HEK293 (cell line): ENCODE measurements at regions of chr3 and their contacts with region 1.

Region 1: GRCh38 chr3:15756505-15756904 is 41.3 kb downstream of the ANKRD28 start:
- H3K4me3 ChIP-seq: no peak overlapping the region
- H3K27ac ChIP-seq: no peak overlapping the region
- H3K4me1 ChIP-seq: 0 out of 2 replicates have a peak, but pooled peaks cover 4% of the 10 kb centered on the region
- CTCF ChIP-seq: no peak

Region 2: DNA sequence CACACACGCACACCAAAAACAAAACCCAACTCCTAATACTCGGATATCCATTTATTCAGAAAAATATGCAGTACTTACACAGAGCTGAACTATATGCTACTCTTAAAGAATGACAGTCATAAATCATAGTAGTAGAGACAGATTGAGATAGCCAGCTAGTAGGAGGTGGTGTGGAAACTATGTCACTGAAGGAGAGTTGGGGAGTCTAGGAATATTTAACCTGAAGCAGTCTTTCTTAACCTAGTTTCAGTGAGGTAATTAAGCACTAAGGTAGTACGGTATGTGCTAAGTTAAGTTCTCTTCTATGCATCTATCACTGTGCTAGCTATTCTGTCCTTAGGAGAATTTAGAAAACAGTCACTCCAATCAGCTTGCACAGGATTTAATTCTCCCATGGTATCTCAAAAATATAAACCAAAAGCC is 12.9 kb before region 1 on chr3:
- CTCF ChIA-PET with region 1: no interaction called
- POLR2A ChIA-PET with region 1: no interaction called
- H3K4me3 ChIP-seq: no peak overlapping the region
- H3K27ac ChIP-seq: no peak overlapping the region
- H3K4me1 ChIP-seq: peaks cover 3% of the 10 kb centered on the region; the same call in 1 of the 2 replicates
- CTCF ChIP-seq: no peak

Region 3: GRCh38 chr3:15845475-15845874 is 89.0 kb after region 1 on chr3:
- CTCF ChIA-PET with region 1: no interaction called
- POLR2A ChIA-PET with region 1: no interaction called
- H3K4me3 ChIP-seq: no peak overlapping the region
- H3K27ac ChIP-seq: no peak overlapping the region
- H3K4me1 ChIP-seq: peaks cover 2% of the 10 kb centered on the region; the same call in 1 of the 2 replicates
- CTCF ChIP-seq: no peak

Region 4: DNA sequence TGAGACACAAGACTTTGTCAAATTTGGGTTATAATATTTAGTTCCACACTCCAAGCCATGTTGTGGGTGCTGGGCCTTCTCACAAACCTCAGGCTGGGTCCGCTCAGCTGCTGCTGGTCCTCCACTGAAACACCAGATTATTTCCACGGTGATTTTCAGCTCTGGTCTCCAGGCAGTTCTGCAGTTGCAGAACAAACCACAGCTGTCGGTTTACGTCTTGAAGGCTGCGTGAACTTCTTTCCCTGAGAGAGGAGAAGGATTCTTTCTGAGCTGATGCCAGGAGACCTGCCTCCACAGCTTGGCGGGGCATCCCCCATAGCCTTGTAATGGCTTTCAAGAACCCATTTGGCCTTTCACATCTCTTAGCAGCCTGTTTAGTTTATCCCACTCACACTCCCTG is 434.2 kb after region 1 on chr3:
- CTCF ChIA-PET with region 1: no interaction called
- POLR2A ChIA-PET with region 1: interaction called, 10 read pairs
- H3K4me3 ChIP-seq: no peak overlapping the region
- H3K27ac ChIP-seq: no peak overlapping the region
- H3K4me1 ChIP-seq: peaks cover 2% of the 10 kb centered on the region; the same call in 1 of the 2 replicates
- CTCF ChIP-seq: no peak